Caco-2 (cell line): ENCODE measurements at regions of chr1 and their contacts with region 1.

Region 1: DNA sequence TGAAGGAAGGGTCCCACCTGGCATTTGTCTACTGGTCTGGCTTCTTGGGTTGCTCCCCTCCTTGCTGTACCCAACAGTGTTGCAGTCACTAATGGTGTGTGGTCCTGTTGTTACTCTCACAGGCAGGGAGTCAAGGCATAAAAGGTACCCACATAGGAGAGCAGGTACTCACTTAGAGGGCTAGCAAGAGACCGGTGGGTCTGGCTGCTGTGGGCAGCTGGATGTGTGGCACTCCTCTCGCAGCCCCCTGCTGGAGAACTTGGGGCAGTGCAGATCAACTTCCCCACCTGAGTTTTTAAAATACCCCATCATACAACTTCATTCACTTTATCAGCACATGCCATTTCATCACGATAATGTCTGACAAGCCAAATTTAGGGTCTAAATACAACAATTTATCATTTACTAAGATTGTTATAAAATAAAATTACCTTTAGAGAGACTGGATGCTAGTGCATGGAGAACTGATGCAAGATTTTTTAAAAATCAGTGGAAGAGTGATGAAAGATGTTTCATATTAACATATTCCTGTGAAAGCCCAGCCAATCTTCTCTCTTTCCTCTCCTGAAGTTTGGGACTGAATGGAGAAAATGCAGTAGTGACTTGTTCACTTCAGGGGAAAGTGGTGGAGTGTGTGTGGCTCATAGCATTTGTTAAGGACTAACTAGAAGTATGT is 42.8 kb downstream of the ACP6 start:
- DNase-seq: peak; percentile 59 to 65
- H3K4me3 ChIP-seq: no peak overlapping the region
- H3K4me3 Mint-ChIP-seq: no peak overlapping the region
- H3K27ac Mint-ChIP-seq: no peak overlapping the region
- H3K4me1 ChIP-seq: peaks cover 30% of the 10 kb centered on the region
- H3K4me1 Mint-ChIP-seq: peaks cover 35% of the 10 kb centered on the region
- H3K27me3 ChIP-seq: no peaks in the 10 kb centered on the region
- H3K27me3 Mint-ChIP-seq: no peaks in the 10 kb centered on the region
- CTCF ChIP-seq: peak; percentile 88 to 90

Region 2: DNA sequence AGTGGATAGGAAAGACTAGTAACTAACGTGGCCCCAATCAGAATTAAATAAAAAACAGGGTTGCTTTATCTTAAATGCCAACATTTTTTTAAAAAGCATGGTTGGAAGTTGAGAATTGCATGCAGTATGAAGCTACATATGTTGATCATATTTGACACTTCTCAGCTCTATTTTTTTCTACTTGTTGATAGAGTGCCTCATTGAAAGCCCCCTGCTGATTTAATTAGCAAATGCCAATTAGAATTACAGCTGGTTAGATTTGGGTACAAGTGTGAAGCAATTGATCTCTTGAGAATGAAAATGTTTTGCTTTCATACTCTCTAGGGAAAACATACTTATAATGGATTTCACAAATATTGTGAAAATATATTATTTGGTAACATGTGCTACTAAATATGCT is 344.6 kb before region 1 on chr1:
- CTCF ChIA-PET with region 1: no interaction called
- POLR2A ChIA-PET with region 1: no interaction called
- intact Hi-C with region 1: no loop called
- DNase-seq: no peak
- H3K4me3 ChIP-seq: no peak overlapping the region
- H3K4me3 Mint-ChIP-seq: no peak overlapping the region
- H3K27ac Mint-ChIP-seq: no peak overlapping the region
- H3K4me1 ChIP-seq: no peaks in the 10 kb centered on the region
- H3K4me1 Mint-ChIP-seq: no peaks in the 10 kb centered on the region
- H3K27me3 ChIP-seq: no peaks in the 10 kb centered on the region
- H3K27me3 Mint-ChIP-seq: no peaks in the 10 kb centered on the region
- CTCF ChIP-seq: no peak

Region 3: GRCh38 chr1:147611021-147611426 is 16.5 kb before region 1 on chr1:
- CTCF ChIA-PET with region 1: interaction called, 5 read pairs
- POLR2A ChIA-PET with region 1: no interaction called
- intact Hi-C with region 1: loop called (anchors 1 kb)
- DNase-seq: no peak
- H3K4me3 ChIP-seq: no peak overlapping the region
- H3K4me3 Mint-ChIP-seq: no peak overlapping the region
- H3K27ac Mint-ChIP-seq: no peak overlapping the region
- H3K4me1 ChIP-seq: peaks cover 21% of the 10 kb centered on the region
- H3K4me1 Mint-ChIP-seq: peaks cover 19% of the 10 kb centered on the region
- H3K27me3 ChIP-seq: no peaks in the 10 kb centered on the region
- H3K27me3 Mint-ChIP-seq: no peaks in the 10 kb centered on the region
- CTCF ChIP-seq: no peak

Region 4: DNA sequence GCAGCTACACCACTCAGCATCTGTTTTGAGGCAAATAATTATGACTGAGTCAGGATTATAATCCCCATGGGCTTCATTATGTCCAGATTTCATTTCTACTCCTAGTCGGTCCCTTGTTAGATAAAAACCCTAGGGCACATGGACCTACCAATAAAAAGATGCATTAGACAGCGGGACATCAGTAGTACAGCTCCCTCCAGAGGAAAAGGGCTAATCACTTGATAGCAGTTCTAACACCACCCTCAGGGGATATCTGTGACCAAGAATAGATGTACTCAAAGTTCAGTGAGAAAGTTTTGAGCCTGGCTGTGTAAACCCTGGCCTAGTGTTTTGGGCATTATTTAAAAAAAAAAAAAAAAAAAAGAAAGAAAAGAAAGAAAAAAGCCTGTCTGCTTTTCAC is 285.0 kb after region 1 on chr1:
- CTCF ChIA-PET with region 1: interaction called, 11 read pairs
- POLR2A ChIA-PET with region 1: no interaction called
- intact Hi-C with region 1: no loop called
- DNase-seq: no peak
- H3K4me3 ChIP-seq: no peak overlapping the region
- H3K4me3 Mint-ChIP-seq: no peak overlapping the region
- H3K27ac Mint-ChIP-seq: no peak overlapping the region
- H3K4me1 ChIP-seq: no peaks in the 10 kb centered on the region
- H3K4me1 Mint-ChIP-seq: no peaks in the 10 kb centered on the region
- H3K27me3 ChIP-seq: no peaks in the 10 kb centered on the region; the same call in 1 of the 2 replicates
- H3K27me3 Mint-ChIP-seq: peaks cover 14% of the 10 kb centered on the region
- CTCF ChIP-seq: no peak